ENCODE measurements at regions of chr7 and their contacts with region 1.

Region 1: GRCh38 chr7:50369143-50370026 is 64.9 kb downstream of the IKZF1 start:
- DNase-seq: peak; percentile 83
- H3K4me3 ChIP-seq: no peak overlapping the region
- H3K27ac ChIP-seq: peak overlapping the region; percentile 30
- H3K4me1 ChIP-seq: peaks cover 17% of the 10 kb centered on the region
- CTCF ChIP-seq: peak; percentile 100

Region 2: DNA sequence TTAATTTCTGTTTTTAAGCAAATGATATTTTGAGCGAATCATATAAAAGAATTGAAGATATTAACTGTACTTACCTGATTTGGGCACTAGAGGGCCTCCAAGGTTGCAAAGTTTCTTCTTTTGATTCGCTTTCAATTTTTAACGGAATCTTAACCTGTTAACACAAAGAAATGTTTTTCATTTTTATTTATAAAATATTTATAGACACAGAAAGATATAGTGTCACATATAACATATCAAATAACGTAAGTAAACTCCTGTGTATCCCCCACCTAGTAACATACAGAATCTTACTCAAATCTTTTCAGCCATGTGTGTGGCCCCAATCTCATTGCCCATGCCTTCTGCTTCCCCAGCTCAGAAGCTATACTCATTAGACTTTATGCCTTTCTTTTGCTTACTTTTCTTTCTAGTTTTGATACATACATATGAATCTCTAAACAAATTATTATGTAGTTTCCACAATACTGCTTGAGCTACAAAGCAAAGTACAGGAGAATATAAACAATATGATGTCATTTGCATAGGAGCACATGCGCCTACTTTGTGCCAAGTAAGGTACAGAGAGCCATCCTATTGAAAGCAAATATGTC is 226.9 kb before region 1 on chr7:
- CTCF ChIA-PET with region 1: interaction called, 4 read pairs
- POLR2A ChIA-PET with region 1: interaction called, 4 read pairs
- intact Hi-C with region 1: loop called (anchors 1 kb)
- DNase-seq: peak; percentile 80
- H3K4me3 ChIP-seq: no peak overlapping the region
- H3K27ac ChIP-seq: peak overlapping the region; percentile 99
- H3K4me1 ChIP-seq: peaks cover 70% of the 10 kb centered on the region
- CTCF ChIP-seq: peak; percentile 96

Region 3: DNA sequence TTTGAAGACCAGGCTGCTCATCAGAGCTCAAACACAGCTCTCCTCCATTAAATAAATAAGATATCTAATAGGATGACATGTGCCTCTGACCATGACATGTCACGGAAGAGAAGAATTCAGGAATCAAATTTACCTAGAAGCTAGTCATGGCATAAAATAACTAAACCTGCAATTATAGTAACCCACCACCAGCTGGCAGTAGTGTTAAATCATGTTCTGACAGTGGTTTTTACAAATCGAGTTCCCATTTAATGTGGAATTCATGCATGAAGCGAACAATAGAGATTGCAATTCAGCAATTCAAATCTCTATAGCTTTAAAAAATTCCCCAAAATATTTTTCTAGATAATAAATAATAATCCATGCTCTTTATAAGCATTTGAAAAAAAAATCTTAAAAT is 139.4 kb before region 1 on chr7:
- CTCF ChIA-PET with region 1: no interaction called
- POLR2A ChIA-PET with region 1: interaction called, 3 read pairs
- intact Hi-C with region 1: loop called (anchors 1 kb)
- DNase-seq: peak; percentile 68
- H3K4me3 ChIP-seq: no peak overlapping the region
- H3K27ac ChIP-seq: no peak overlapping the region
- H3K4me1 ChIP-seq: no peaks in the 10 kb centered on the region
- CTCF ChIP-seq: peak; percentile 97

Region 4: DNA sequence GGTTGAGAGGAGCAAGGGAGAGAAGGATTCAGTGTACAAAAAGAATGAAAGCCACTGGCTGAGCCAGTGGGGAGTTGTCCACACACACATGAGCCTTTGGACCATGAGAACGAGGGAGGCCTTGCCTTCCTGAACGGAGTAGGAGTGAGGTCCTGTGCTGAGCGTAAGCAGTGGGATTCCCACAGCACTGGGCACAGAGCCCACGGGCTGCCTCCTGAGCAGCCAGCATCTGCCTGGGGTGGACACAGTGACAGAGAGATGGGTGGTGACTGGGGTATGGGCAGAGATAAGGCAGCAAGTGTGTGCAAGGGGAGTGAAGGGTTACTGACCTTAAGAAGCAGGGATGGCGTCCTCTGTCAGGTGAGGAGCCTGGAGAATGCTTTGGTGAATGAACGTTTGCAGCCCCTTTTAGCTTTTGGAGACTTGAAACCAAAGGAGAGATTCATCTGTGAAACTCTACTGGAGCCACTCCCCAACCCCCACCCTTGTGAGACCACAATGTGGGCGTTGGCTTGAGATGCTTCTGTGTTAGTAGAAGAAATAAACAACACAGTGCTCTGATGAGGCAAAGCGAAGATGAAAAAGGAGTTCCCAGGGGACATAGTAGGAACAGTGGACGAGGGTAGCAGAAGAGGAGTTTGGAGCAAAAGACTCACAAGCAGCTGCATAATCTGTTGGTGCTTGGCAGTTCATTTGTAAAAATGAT is 24.3 kb after region 1 on chr7:
- CTCF ChIA-PET with region 1: no interaction called
- POLR2A ChIA-PET with region 1: no interaction called
- intact Hi-C with region 1: no loop called
- DNase-seq: no peak
- H3K4me3 ChIP-seq: no peak overlapping the region
- H3K27ac ChIP-seq: no peak overlapping the region
- H3K4me1 ChIP-seq: peaks cover 11% of the 10 kb centered on the region
- CTCF ChIP-seq: no peak

Region 5: DNA sequence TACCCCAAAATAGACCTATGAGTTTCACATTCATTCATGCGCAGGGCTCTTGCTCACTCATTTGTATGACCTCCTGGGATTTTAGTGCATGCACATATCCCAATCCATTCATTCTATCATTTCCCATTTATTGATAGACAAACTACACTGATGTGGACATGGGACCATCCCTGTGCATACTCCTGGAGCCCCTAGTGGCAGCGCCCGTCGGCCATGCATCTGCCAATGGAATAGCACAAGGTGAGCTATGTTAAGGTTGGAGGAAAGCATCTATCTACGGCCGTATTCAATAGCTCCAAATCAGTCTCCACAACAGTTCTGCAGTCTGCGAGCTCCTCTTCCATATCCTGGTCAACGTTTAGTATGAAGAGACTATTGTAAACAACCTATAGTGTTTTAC is 112.5 kb after region 1 on chr7:
- CTCF ChIA-PET with region 1: no interaction called
- POLR2A ChIA-PET with region 1: no interaction called
- intact Hi-C with region 1: no loop called
- DNase-seq: no peak
- H3K4me3 ChIP-seq: no peak overlapping the region
- H3K27ac ChIP-seq: no peak overlapping the region
- H3K4me1 ChIP-seq: no peaks in the 10 kb centered on the region
- CTCF ChIP-seq: no peak